ENCODE measurements at regions of chr5 and their contacts with region 1.

Region 1: DNA sequence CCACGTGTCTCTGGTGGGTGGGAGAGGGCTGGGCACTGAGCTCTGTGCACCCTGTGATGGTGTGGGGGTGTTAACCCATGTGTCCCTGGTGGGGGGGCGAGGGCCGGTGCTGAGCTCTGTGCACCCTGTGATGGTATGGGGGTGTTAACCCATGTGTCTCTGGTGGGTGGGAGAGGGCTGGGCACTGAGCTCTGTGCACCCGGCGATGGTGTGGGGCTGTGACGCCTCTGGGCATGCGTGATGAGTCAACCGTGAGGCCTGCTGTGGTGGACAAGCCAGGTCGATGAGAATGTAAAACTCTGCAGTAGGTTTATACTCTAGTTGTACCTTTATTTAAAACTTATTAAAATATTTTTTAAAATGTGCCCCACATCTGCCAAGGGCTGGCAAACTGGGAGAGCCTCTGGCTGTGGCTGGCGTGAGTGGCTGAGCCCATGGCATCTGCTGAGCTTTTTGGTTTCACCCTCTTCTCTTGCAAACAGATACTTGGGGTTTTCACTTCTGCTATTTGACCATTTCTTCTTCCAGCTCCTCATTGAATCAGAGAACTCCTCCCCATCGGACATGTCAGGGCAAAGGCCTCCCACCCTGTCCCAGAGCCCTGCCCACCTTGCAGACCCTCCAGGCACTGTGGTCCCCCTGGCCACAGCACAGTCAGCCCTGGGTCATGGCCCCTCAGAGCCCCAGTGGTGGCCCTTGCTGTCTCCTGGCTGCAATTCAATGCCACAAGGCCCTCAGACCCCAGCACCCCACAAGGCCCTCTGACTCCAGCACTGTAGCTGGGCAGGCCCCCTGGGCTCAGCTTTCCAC is 18.5 kb upstream of the EXOC3 start:
- DNase-seq: no peak
- H3K4me3 ChIP-seq: no peak overlapping the region
- H3K27ac ChIP-seq: peak overlapping the region; percentile 19
- H3K4me1 ChIP-seq: peaks cover 16% of the 10 kb centered on the region
- H3K27me3 ChIP-seq: no peaks in the 10 kb centered on the region
- CTCF ChIP-seq: no peak

Region 2: GRCh38 chr5:298737-299125 is 125.8 kb before region 1 on chr5:
- CTCF ChIA-PET with region 1: no interaction called
- dilution Hi-C with region 1: no loop called
- in situ Hi-C with region 1: no loop called
- intact Hi-C with region 1: no loop called
- DNase-seq: no peak
- H3K4me3 ChIP-seq: no peak overlapping the region
- H3K27ac ChIP-seq: no peak overlapping the region
- H3K4me1 ChIP-seq: no peaks in the 10 kb centered on the region
- H3K27me3 ChIP-seq: no peaks in the 10 kb centered on the region
- CTCF ChIP-seq: no peak

Region 3: GRCh38 chr5:386432-387341 is 37.8 kb before region 1 on chr5:
- CTCF ChIA-PET with region 1: no interaction called
- dilution Hi-C with region 1: no loop called
- in situ Hi-C with region 1: no loop called
- intact Hi-C with region 1: loop called (anchors 5 kb)
- DNase-seq: no peak
- H3K4me3 ChIP-seq: no peak overlapping the region
- H3K27ac ChIP-seq: no peak overlapping the region
- H3K4me1 ChIP-seq: no peaks in the 10 kb centered on the region
- H3K27me3 ChIP-seq: peaks cover 1% of the 10 kb centered on the region
- CTCF ChIP-seq: no peak

Region 4: GRCh38 chr5:513216-514100 is 89.0 kb after region 1 on chr5:
- CTCF ChIA-PET with region 1: no interaction called
- dilution Hi-C with region 1: loop called (anchors 10 kb)
- in situ Hi-C with region 1: no loop called
- intact Hi-C with region 1: no loop called
- DNase-seq: no peak
- H3K4me3 ChIP-seq: no peak overlapping the region
- H3K27ac ChIP-seq: no peak overlapping the region
- H3K4me1 ChIP-seq: peaks cover 7% of the 10 kb centered on the region
- H3K27me3 ChIP-seq: peaks cover 4% of the 10 kb centered on the region
- CTCF ChIP-seq: no peak

Measured in mammary epithelial cell (primary cell).